A673 (cell line): ENCODE measurements at regions of chr14 and their contacts with region 1.

Region 1: DNA sequence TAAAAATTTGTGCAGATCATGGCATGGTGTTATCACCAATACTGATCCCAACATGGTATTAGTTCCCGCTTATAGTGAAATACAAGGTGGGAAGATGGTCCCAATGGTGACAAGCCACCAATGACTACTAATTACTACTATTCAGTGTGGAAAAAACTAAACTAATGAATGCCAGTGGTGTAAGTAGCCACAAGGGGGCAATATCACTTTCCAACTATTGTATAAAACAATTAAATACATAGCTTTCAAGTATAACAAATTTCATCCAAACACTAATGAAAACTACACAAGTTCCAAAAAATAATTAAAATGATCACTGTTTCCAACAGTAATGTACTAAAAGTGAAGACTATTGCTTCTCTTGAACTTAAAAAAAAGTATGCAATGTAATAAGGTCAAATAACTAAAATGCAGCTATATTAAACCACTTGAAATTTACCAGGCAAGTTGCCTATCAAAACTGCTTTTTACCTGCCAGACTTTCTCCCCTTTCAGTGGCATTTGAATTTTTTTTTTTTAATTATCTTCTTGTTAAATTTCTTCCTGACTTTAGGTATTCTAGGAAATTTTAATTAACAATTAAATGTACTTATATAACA is 58.0 kb downstream of the PAPLN start:
- DNase-seq: peak; percentile 73
- H3K4me3 ChIP-seq: no peak overlapping the region
- H3K27ac ChIP-seq: no peak overlapping the region
- H3K4me1 ChIP-seq: no peaks in the 10 kb centered on the region
- H3K27me3 ChIP-seq: no peaks in the 10 kb centered on the region
- CTCF ChIP-seq: peak; percentile 88

Region 2: DNA sequence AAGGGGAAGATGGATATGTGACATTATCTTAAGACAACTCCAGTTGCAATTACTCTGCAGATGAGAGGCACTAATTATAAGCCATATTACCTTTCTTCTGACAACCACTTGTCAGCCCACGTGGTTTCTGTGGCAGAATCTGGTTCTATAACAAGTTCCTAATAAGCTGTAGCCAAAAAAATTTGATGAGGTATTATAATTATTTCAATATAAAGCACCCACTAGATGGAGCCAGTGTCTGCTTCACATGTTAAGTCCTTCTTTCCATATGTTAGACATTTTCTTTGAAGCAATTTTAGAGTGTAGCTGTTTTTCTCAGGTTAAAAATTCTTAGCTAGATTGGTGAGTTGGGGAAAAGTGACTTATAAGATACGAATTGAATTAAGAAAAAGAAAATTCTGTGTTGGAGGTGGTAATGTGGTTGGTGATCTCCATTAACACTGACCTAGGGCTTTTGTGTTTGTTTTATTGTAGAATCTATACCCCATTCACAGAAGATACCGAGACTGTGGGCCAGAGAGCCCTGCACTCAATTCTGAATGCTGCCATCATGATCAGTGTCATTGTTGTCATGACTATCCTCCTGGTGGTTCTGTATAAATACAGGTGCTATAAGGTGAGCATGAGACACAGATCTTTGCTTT is 122.1 kb before region 1 on chr14:
- CTCF ChIA-PET with region 1: interaction called, 6 read pairs
- POLR2A ChIA-PET with region 1: no interaction called
- intact Hi-C with region 1: loop called (anchors 5 kb)
- DNase-seq: peak; percentile 63
- H3K4me3 ChIP-seq: no peak overlapping the region
- H3K27ac ChIP-seq: no peak overlapping the region
- H3K4me1 ChIP-seq: no peaks in the 10 kb centered on the region
- H3K27me3 ChIP-seq: no peaks in the 10 kb centered on the region
- CTCF ChIP-seq: peak; percentile 65

Region 3: DNA sequence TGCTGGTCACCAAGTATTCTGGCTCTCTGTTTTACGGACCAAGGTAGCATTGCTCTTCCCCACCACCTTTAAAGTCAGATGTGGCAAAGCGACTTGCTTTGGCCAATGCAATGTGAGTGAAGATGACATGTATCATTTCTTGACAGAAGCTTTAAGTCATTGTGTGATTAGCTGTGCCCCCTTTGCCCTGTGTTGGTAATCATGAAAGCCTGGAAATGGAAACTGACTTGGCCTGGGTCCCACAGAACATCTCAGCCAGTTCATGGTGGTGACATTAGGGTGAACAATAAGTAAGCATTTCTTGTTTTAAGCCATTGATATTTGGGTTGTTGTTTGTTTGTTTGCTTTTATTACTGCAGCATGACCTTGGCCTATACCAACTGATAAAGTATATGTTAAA is 1451.9 kb after region 1 on chr14:
- CTCF ChIA-PET with region 1: interaction called, 12 read pairs
- POLR2A ChIA-PET with region 1: no interaction called
- intact Hi-C with region 1: no loop called
- DNase-seq: no peak
- H3K4me3 ChIP-seq: no peak overlapping the region
- H3K27ac ChIP-seq: no peak overlapping the region
- H3K4me1 ChIP-seq: no peaks in the 10 kb centered on the region
- H3K27me3 ChIP-seq: no peaks in the 10 kb centered on the region
- CTCF ChIP-seq: no peak